Activated CD8-positive, alpha-beta T cell treated with anti-CD3 and anti-CD28 coated beads, Interleukin-2, amount 10 ng/mL, durations not matched to agents 7 days and 5 days (primary cell): ENCODE measurements at regions of chr22 and their contacts with region 1.

Region 1: GRCh38 chr22:21641789-21642583 is at the start of gene SDF2L1:
- DNase-seq: peak; percentile 99
- ATAC-seq: peak; percentile 98
- H3K4me3 Mint-ChIP-seq: peak within 1 kb of the TSS; percentile 92
- H3K27ac Mint-ChIP-seq: peak within 1 kb of the TSS; percentile 96
- H3K4me1 Mint-ChIP-seq: peaks cover 38% of the 10 kb centered on the region
- H3K27me3 Mint-ChIP-seq: no peaks in the 10 kb centered on the region
- total RNA-seq, gene SDF2L1: 85.9 to 86.4 TPM

Region 2: DNA sequence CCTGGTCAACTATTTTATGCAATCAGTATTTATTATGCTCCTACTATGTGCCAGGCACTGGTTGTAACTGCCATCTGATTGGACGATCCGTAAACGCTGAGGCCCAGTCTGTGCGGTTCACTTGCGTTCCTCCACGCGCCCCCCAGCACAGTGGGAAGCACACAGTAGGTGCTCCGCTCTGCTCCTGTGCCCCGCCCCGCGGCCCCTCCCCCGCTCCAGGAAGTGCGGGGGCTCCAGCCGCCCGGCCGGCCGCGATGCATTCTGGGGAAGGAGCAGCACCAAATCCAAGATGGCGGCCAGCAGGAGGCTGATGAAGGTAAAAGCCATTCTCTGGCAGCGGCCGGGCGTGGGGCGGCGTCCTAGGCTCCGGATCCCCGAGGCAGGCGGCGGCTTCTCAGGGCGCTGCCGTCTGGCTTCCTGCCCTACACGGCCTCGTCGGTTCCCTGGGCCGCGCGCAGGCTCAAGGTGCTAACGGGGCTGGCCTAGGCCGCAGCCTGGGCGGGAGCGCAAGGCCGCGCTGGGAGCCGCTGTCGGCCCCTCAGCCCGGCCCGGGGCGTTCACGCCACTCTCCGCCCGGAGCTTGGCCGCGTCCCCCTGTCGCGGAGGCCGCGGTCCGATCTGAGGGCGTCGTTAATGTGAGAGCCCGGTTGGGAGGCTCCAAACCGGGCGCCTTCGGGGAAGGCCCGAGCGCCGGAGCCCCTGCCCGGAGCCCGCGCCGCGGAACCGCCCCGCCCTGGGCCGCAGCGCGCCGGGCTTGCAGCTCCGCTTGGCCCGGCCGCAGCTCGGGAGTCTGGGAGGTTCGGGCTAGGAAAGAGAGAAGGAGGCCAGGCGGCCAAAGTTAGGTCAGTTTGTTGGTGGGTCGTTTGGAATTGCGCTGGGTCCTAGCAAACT is 74.3 kb before region 1 on chr22 and contains the start of gene UBE2L3:
- CTCF ChIA-PET with region 1: interaction called, 15 read pairs
- POLR2A ChIA-PET with region 1: interaction called, 12 read pairs
- DNase-seq: peak; percentile 90
- ATAC-seq: peak; percentile 77
- H3K4me3 Mint-ChIP-seq: peak within 1 kb of the TSS; percentile 96
- H3K27ac Mint-ChIP-seq: peak within 1 kb of the TSS; percentile 94
- H3K4me1 Mint-ChIP-seq: peaks cover 44% of the 10 kb centered on the region
- H3K27me3 Mint-ChIP-seq: no peaks in the 10 kb centered on the region
- total RNA-seq, gene UBE2L3: 65.3 to 69.6 TPM

Region 3: GRCh38 chr22:21624120-21624879 is 17.7 kb before region 1 on chr22:
- CTCF ChIA-PET with region 1: interaction called, 304 read pairs
- POLR2A ChIA-PET with region 1: interaction called, 62 read pairs
- DNase-seq: peak; percentile 50
- ATAC-seq: no peak
- H3K4me3 Mint-ChIP-seq: no peak overlapping the region
- H3K27ac Mint-ChIP-seq: peak overlapping the region; percentile 61
- H3K4me1 Mint-ChIP-seq: peaks cover 30% of the 10 kb centered on the region
- H3K27me3 Mint-ChIP-seq: no peaks in the 10 kb centered on the region

Region 4: GRCh38 chr22:21629262-21630149 is 12.5 kb before region 1 on chr22 and contains the start of gene YDJC:
- CTCF ChIA-PET with region 1: interaction called, 304 read pairs
- POLR2A ChIA-PET with region 1: interaction called, 62 read pairs
- DNase-seq: peak; percentile 95
- ATAC-seq: peak; percentile 88
- H3K4me3 Mint-ChIP-seq: peak within 1 kb of the TSS; percentile 87
- H3K27ac Mint-ChIP-seq: peak within 1 kb of the TSS; percentile 95
- H3K4me1 Mint-ChIP-seq: peaks cover 46% of the 10 kb centered on the region
- H3K27me3 Mint-ChIP-seq: no peaks in the 10 kb centered on the region
- total RNA-seq, gene YDJC: 46.7 to 47.1 TPM

Region 5: GRCh38 chr22:21652010-21652546 is 10.1 kb after region 1 on chr22:
- CTCF ChIA-PET with region 1: interaction called, 304 read pairs
- POLR2A ChIA-PET with region 1: interaction called, 23 read pairs
- DNase-seq: peak; percentile 93
- ATAC-seq: peak; percentile 99
- H3K4me3 Mint-ChIP-seq: peak overlapping the region; percentile 94
- H3K27ac Mint-ChIP-seq: peak overlapping the region; percentile 87
- H3K4me1 Mint-ChIP-seq: peaks cover 38% of the 10 kb centered on the region
- H3K27me3 Mint-ChIP-seq: no peaks in the 10 kb centered on the region